H1 (cell line): ENCODE measurements at regions of chr7 and their contacts with region 1.

Region 1: GRCh38 chr7:128387216-128388144 is 22.3 kb downstream of the IMPDH1 start:
- DNase-seq: peak; percentile 78 to 96
- H3K4me3 ChIP-seq: no peak overlapping the region; a peak in 1 of 8 replicates
- H3K27ac ChIP-seq: no peak overlapping the region
- H3K4me1 ChIP-seq: peaks cover 0 to 13% (median 11%) of the 10 kb centered on the region in 4 experiments; a peak in 6 of 7 replicates
- H3K27me3 ChIP-seq: peaks cover 0 to 6% (median 0%) of the 10 kb centered on the region in 4 experiments; a peak in 2 of 7 replicates
- CTCF ChIP-seq: peak; percentile 84 to 95 (median 93)
- EP300 ChIP-seq: no peak
- POLR2A ChIP-seq: no peak
- RAD21 ChIP-seq: peak; percentile 81 to 86

Region 2: DNA sequence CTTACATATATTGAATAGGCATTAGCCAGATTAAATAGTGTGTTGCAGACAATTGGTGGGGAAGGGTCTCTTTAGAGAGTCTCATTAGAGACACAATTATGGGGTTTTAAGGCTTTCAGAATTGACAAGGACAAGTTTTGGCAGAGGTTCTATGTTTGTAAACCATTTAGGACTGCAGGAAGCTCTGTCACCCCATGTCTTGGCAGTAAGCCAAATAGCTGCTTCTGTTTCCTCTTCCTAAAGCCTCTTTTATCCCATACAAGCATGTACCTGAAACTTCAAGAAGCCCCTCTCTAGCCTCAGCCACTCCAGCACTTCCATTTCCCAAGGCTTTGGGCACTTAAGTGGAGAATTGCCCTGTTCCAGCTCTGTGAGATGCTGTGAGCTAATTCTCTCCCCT is 334.5 kb before region 1 on chr7:
- CTCF ChIA-PET with region 1: no interaction called
- POLR2A ChIA-PET with region 1: no interaction called
- DNase-seq: no peak
- H3K4me3 ChIP-seq: no peak overlapping the region
- H3K27ac ChIP-seq: no peak overlapping the region
- H3K4me1 ChIP-seq: no peaks in the 10 kb centered on the region
- H3K27me3 ChIP-seq: no peaks in the 10 kb centered on the region
- CTCF ChIP-seq: no peak
- EP300 ChIP-seq: no peak
- POLR2A ChIP-seq: no peak
- RAD21 ChIP-seq: no peak

Region 3: GRCh38 chr7:128343554-128344430 is 43.7 kb before region 1 on chr7 and contains the start of gene RBM28:
- CTCF ChIA-PET with region 1: interaction called, 345 read pairs
- POLR2A ChIA-PET with region 1: interaction called, 11 read pairs
- DNase-seq: peak; percentile 65 to 95
- H3K4me3 ChIP-seq: peak within 1 kb of the TSS; percentile 67 to 90 (median 88)
- H3K27ac ChIP-seq: peak within 1 kb of the TSS; percentile 90
- H3K4me1 ChIP-seq: peaks cover 0 to 5% (median 4%) of the 10 kb centered on the region in 4 experiments; a peak in 3 of 7 replicates
- H3K27me3 ChIP-seq: peaks cover under 1 to 7% (median 2%) of the 10 kb centered on the region in 4 experiments; a peak in 6 of 7 replicates
- CTCF ChIP-seq: no peak
- EP300 ChIP-seq: no peak
- POLR2A ChIP-seq: peak; percentile 85 to 91
- RAD21 ChIP-seq: 0 out of 4 replicates have a peak, but pooled peaks of 1 of the 2 experiments have one; percentile 9
- total RNA-seq, gene RBM28: 65.3 and 68.0 TPM in 2 replicates

Region 4: GRCh38 chr7:128361411-128362379 is 25.8 kb before region 1 on chr7 and contains the start of gene PRRT4:
- CTCF ChIA-PET with region 1: interaction called, 274 read pairs
- POLR2A ChIA-PET with region 1: interaction called, 4 read pairs
- DNase-seq: peak in 1 of 2 experiments; percentile 73
- H3K4me3 ChIP-seq: peak within 1 kb of the TSS; percentile 44 to 77 (median 66)
- H3K27ac ChIP-seq: no peak within 1 kb of the TSS
- H3K4me1 ChIP-seq: peaks cover 0 to 14% (median 7%) of the 10 kb centered on the region in 4 experiments; a peak in 5 of 7 replicates
- H3K27me3 ChIP-seq: peaks cover 28 to 70% (median 57%) of the 10 kb centered on the region in 4 experiments
- CTCF ChIP-seq: peak; percentile 14 to 25 (median 19); a peak in 3 of 4 replicates
- EP300 ChIP-seq: no peak
- POLR2A ChIP-seq: no peak
- RAD21 ChIP-seq: peak in 1 of 2 experiments; percentile 24; a peak in 1 of 4 replicates
- total RNA-seq, gene PRRT4: 0.34 and 0.69 TPM in 2 replicates

Region 5: GRCh38 chr7:128398016-128398840 is 10.7 kb after region 1 on chr7:
- CTCF ChIA-PET with region 1: interaction called, 275 read pairs
- POLR2A ChIA-PET with region 1: interaction called, 6 read pairs
- DNase-seq: peak in 1 of 2 experiments; percentile 92
- H3K4me3 ChIP-seq: no peak overlapping the region
- H3K27ac ChIP-seq: no peak overlapping the region
- H3K4me1 ChIP-seq: no peaks in the 10 kb centered on the region
- H3K27me3 ChIP-seq: no peaks in the 10 kb centered on the region
- CTCF ChIP-seq: peak; percentile 89 to 96 (median 92)
- EP300 ChIP-seq: no peak
- POLR2A ChIP-seq: no peak
- RAD21 ChIP-seq: peak; percentile 83 to 86

Region 6: DNA sequence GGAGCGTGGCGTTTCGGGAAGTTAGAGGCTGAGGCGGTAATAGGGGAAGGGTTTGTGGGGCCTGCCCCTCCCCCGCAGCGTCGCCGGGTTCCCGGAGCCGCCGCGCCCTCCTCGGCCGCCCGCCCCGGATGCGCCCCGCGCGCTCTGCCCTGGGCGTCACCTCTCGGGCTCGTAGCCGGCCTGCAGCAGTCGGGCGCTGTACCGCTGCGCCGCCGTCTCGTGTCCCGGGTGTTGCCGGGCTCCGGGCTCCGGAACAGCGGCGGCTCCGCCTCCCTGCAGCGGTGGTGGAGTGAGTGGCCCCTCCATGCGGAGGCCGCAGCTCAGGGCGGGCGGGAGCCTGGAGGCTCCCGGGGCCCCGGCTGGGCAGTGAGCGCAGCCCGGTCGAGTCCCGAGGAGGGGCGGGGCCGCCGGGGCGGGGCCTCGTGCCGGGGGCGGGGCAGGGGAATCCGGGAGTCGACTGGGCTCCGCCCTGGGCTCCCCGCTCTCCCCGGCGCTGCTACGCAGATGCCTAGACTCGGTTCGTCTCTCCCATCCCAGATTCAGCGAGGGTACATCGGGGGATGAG is 22.2 kb after region 1 on chr7 and contains the start of gene IMPDH1:
- CTCF ChIA-PET with region 1: interaction called, 275 read pairs
- POLR2A ChIA-PET with region 1: interaction called, 8 read pairs
- DNase-seq: peak in 1 of 2 experiments; percentile 97
- H3K4me3 ChIP-seq: peak within 1 kb of the TSS; percentile 52 to 78 (median 64)
- H3K27ac ChIP-seq: no peak within 1 kb of the TSS
- H3K4me1 ChIP-seq: peaks cover 0 to 30% (median 23%) of the 10 kb centered on the region in 4 experiments; a peak in 6 of 7 replicates
- H3K27me3 ChIP-seq: peaks cover 33 to 73% (median 53%) of the 10 kb centered on the region in 4 experiments
- CTCF ChIP-seq: no peak
- EP300 ChIP-seq: no peak
- POLR2A ChIP-seq: peak in 1 of 2 experiments; percentile 51; a peak in 1 of 3 replicates
- RAD21 ChIP-seq: no peak
- total RNA-seq, gene IMPDH1: 44.0 and 45.8 TPM in 2 replicates

Region 7: GRCh38 chr7:128415217-128415785 is 27.8 kb after region 1 on chr7:
- CTCF ChIA-PET with region 1: interaction called, 24 read pairs
- POLR2A ChIA-PET with region 1: interaction called, 3 read pairs
- DNase-seq: no peak
- H3K4me3 ChIP-seq: no peak overlapping the region
- H3K27ac ChIP-seq: no peak overlapping the region
- H3K4me1 ChIP-seq: 0 out of 7 replicates have a peak, but pooled peaks cover 0 to 3% (median 0%) of the 10 kb centered on the region in 4 experiments
- H3K27me3 ChIP-seq: peaks cover 2 to 23% (median 10%) of the 10 kb centered on the region in 4 experiments; a peak in 6 of 7 replicates
- CTCF ChIP-seq: no peak
- EP300 ChIP-seq: no peak
- POLR2A ChIP-seq: no peak
- RAD21 ChIP-seq: no peak

Region 8: GRCh38 chr7:128455551-128456254 is 68.2 kb after region 1 on chr7 and contains the start of gene HILPDA:
- CTCF ChIA-PET with region 1: interaction called, 37 read pairs
- POLR2A ChIA-PET with region 1: no interaction called
- DNase-seq: peak in 1 of 2 experiments; percentile 93
- H3K4me3 ChIP-seq: peak within 1 kb of the TSS; percentile 96 to 100 (median 100)
- H3K27ac ChIP-seq: peak within 1 kb of the TSS; percentile 93
- H3K4me1 ChIP-seq: peaks cover 9 to 20% (median 14%) of the 10 kb centered on the region in 4 experiments
- H3K27me3 ChIP-seq: no peaks in the 10 kb centered on the region; a peak in 2 of 7 replicates
- CTCF ChIP-seq: no peak
- EP300 ChIP-seq: no peak
- POLR2A ChIP-seq: peak; percentile 86 to 96
- RAD21 ChIP-seq: peak in 1 of 2 experiments; percentile 2; a peak in 1 of 4 replicates
- total RNA-seq, gene HILPDA: 33.9 and 35.6 TPM in 2 replicates